Psoas muscle (tissue), 8 donors: ENCODE measurements at regions of chr3 and their contacts with region 1.

Region 1: DNA sequence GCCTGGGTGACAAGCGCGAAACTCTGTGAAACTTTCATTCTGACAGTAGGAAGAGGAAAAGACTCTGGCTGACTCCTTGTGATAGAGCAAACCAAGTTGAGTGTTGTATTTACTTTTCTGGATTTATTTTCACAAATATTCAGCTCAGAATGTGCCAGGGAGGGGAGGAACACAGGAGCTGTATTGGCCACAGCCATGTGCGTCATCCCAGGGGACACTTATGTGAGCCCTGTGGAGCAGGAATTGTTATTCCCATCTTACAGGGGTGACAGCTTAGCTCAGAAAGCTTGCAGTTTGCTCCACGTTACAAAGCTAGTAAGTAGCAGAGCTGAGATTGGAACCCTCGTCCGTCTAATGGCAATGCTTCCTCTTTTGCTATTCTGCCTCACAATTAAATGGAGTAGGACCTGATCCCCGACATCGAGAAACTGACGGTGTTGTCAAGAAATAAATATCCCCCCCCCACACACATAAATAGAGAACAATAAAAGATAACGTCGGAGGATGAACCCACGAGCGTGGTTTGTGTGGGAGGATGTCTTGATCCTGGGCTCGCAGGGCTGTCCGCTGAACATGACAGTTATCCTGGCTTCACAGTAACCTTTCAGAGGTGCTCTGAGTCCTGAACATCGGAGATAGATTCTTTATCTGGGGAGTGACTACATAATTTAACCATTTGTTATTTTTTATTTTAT is 151.6 kb upstream of the CTDSPL start:
- DNase-seq: no peak
- ATAC-seq: no peak
- H3K4me3 ChIP-seq: no peak overlapping the region
- H3K27ac ChIP-seq: no peak overlapping the region
- H3K4me1 ChIP-seq: peaks cover 9% of the 10 kb centered on the region
- H3K27me3 ChIP-seq: peaks cover 0 to 1% (median 0%) of the 10 kb centered on the region in 3 donors
- CTCF ChIP-seq: no peak

Region 2: GRCh38 chr3:37814547-37814946 is 104.5 kb after region 1 on chr3:
- intact Hi-C with region 1: no loop called
- DNase-seq: no peak
- ATAC-seq: no peak
- H3K4me3 ChIP-seq: no peak overlapping the region
- H3K27ac ChIP-seq: no peak overlapping the region
- H3K4me1 ChIP-seq: peaks cover 8% of the 10 kb centered on the region
- H3K27me3 ChIP-seq: no peaks in the 10 kb centered on the region
- CTCF ChIP-seq: no peak

Region 3: GRCh38 chr3:38043486-38043885 is 333.4 kb after region 1 on chr3:
- intact Hi-C with region 1: loop called in 1 of 2 experiments (anchors 2 kb)
- DNase-seq: no peak
- ATAC-seq: no peak
- H3K4me3 ChIP-seq: no peak overlapping the region
- H3K27ac ChIP-seq: no peak overlapping the region
- H3K4me1 ChIP-seq: no peaks in the 10 kb centered on the region
- H3K27me3 ChIP-seq: peaks cover 0 to 22% (median 1%) of the 10 kb centered on the region in 3 donors
- CTCF ChIP-seq: no peak